ENCODE measurements at regions of chr11 and their contacts with region 1.

Region 1: GRCh38 chr11:15101072-15101709 is 13.5 kb upstream of the INSC start:
- DNase-seq: peak; percentile 71
- ATAC-seq: peak; percentile 80
- H3K4me3 Mint-ChIP-seq: no peak overlapping the region
- H3K27ac Mint-ChIP-seq: no peak overlapping the region
- H3K4me1 Mint-ChIP-seq: peaks cover 6% of the 10 kb centered on the region
- H3K27me3 Mint-ChIP-seq: peaks cover 29% of the 10 kb centered on the region

Region 2: DNA sequence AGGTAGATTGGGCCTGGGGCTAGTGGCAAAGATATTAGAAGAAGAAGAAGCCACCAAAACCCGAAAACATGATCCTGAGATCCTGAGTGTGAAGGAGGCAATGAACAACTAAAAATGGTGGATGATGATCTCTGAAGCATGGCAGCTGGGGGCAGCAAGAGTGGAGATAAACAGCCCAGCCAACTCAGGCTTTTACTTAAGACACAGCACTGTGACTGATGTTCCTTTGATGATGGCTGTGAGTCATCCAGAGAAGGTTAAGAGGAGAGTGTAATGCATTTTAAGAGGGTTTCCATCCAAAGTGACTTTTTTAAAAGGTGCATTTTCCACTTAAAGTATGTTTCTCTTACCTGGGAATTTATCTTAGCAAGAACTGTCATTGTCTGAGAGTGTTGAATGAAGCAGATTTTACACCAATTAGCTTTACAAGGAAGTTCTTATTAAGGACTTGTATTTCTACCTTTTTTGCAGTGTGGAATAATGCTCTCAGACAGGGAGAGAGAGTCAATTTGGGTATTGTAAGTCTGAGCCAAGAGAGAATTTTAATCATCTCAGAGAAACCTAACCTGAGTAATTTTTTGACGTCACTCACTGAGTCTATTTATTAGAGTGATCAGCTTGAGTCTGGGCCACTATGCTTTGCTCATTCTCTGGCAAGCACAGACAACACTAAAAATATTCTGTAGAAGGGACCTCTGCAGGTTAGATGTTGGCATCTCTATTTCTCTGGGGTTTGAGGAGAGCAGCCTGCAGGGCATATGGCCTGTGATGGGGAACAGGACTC is 41.9 kb before region 1 on chr11:
- CTCF ChIA-PET with region 1: no interaction called
- DNase-seq: no peak
- ATAC-seq: no peak
- H3K4me3 Mint-ChIP-seq: no peak overlapping the region
- H3K27ac Mint-ChIP-seq: no peak overlapping the region
- H3K4me1 Mint-ChIP-seq: no peaks in the 10 kb centered on the region
- H3K27me3 Mint-ChIP-seq: peaks cover 25% of the 10 kb centered on the region

Region 3: DNA sequence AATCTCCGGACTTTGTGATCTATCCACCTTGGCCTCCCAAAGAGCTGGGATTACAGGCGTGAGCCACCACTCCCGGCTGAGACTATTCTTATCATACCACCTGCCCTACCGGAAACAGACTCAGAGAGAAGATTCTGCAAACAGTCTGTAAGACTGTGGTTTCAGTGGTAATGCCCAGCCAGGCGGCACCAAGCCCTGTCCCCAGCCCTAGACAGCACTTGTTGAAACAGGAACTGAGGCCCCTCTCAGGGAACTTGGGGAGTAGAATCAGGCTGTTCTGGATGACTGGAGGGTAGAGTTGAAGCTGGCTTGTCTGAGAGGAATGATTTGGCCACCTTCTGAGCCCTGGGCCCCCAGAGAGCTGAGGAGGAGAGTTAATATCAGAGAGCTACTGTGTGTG is 12.2 kb after region 1 on chr11:
- CTCF ChIA-PET with region 1: interaction called, 22 read pairs
- DNase-seq: peak; percentile 57
- ATAC-seq: peak; percentile 52
- H3K4me3 Mint-ChIP-seq: no peak overlapping the region
- H3K27ac Mint-ChIP-seq: peak overlapping the region; percentile 16
- H3K4me1 Mint-ChIP-seq: peaks cover 27% of the 10 kb centered on the region
- H3K27me3 Mint-ChIP-seq: peaks cover 34% of the 10 kb centered on the region

Region 4: DNA sequence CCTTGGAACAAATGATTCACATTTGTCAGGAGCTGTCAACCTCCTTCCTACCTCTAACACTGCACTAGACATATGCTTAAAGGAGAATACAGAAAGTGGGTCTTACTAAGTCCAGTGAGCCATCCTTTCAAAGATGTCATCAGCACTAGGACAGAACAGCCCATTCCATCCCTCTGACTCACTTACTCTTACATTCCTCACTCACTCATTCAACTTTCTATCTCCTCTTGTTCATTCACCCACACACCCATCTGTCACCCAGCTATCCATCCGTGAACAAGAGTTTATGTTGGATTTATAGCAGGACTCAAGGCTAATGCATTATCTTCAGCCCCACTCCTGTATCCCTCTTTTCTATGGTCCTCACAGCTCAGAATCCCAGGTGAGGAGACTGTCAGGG is 22.7 kb after region 1 on chr11:
- CTCF ChIA-PET with region 1: interaction called, 22 read pairs
- DNase-seq: no peak
- ATAC-seq: no peak
- H3K4me3 Mint-ChIP-seq: no peak overlapping the region
- H3K27ac Mint-ChIP-seq: no peak overlapping the region
- H3K4me1 Mint-ChIP-seq: peaks cover 17% of the 10 kb centered on the region
- H3K27me3 Mint-ChIP-seq: peaks cover 57% of the 10 kb centered on the region

Region 5: GRCh38 chr11:15159085-15159484 is 57.9 kb after region 1 on chr11:
- CTCF ChIA-PET with region 1: interaction called, 39 read pairs
- DNase-seq: no peak
- ATAC-seq: peak; percentile 45
- H3K4me3 Mint-ChIP-seq: no peak overlapping the region
- H3K27ac Mint-ChIP-seq: no peak overlapping the region
- H3K4me1 Mint-ChIP-seq: no peaks in the 10 kb centered on the region
- H3K27me3 Mint-ChIP-seq: peaks cover 14% of the 10 kb centered on the region